Activated naive CD4-positive, alpha-beta T cell treated with anti-CD3 and anti-CD28 coated beads for 36 hours (primary cell): ENCODE measurements at regions of chr15 and their contacts with region 1.

Region 1: DNA sequence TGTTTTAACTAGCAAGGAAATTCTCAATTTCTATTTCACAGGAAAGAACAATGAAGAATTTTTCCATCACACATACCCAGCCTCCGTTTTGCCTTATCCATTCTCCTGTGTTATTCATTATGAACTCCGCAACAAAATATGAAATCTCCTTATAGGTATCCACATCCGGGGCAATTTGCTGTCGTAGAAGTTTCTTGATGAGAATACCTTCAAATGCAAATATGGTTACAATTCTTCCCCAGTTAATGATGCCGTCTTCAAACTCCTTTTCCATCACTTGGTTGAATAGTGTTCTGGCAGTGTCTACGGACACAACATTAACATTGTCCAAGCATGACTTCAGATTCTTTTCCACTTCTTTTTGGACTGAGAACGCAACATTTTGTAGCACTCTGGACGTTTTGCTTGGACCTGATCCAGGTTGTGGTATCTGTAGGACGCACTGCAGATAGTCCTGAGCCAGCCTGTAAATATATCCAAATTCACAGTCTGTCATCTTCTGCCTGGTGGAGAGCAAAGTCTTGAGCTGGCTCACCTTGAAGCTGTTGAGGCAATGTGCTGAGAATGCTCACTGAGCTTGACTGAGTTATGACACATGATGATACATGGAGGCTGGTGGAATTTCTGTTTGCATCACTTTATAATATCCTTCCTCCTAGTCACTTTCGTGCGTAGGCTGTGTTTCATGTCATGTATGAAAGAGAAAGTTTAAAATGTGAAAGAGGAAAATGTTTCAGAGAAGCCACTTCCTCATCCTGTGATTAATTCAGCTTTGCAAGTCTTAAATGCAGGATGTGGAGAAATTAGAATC is at the start of gene BCL2A1:
- DNase-seq: peak; percentile 88
- H3K4me3 Mint-ChIP-seq: peak within 1 kb of the TSS; percentile 81
- H3K27ac Mint-ChIP-seq: peak within 1 kb of the TSS; percentile 95
- H3K4me1 Mint-ChIP-seq: peaks cover 42% of the 10 kb centered on the region
- H3K27me3 Mint-ChIP-seq: no peaks in the 10 kb centered on the region
- total RNA-seq, gene BCL2A1: 79.1 to 88.7 TPM

Region 2: GRCh38 chr15:79896637-79897379 is 74.0 kb before region 1 on chr15 and contains the start of gene MTHFS:
- CTCF ChIA-PET with region 1: interaction called, 3 read pairs
- intact Hi-C with region 1: loop called (anchors 1 kb)
- DNase-seq: peak; percentile 76
- H3K4me3 Mint-ChIP-seq: peak within 1 kb of the TSS; percentile 100
- H3K27ac Mint-ChIP-seq: peak within 1 kb of the TSS; percentile 100
- H3K4me1 Mint-ChIP-seq: peaks cover 42% of the 10 kb centered on the region
- H3K27me3 Mint-ChIP-seq: no peaks in the 10 kb centered on the region
- total RNA-seq, gene MTHFS: 44.8 to 47.0 TPM

Region 3: GRCh38 chr15:79957741-79958140 is 13.1 kb before region 1 on chr15:
- CTCF ChIA-PET with region 1: no interaction called
- intact Hi-C with region 1: loop called (anchors 1 kb)
- DNase-seq: no peak
- H3K4me3 Mint-ChIP-seq: no peak overlapping the region
- H3K27ac Mint-ChIP-seq: no peak overlapping the region
- H3K4me1 Mint-ChIP-seq: peaks cover 47% of the 10 kb centered on the region
- H3K27me3 Mint-ChIP-seq: no peaks in the 10 kb centered on the region

Region 4: DNA sequence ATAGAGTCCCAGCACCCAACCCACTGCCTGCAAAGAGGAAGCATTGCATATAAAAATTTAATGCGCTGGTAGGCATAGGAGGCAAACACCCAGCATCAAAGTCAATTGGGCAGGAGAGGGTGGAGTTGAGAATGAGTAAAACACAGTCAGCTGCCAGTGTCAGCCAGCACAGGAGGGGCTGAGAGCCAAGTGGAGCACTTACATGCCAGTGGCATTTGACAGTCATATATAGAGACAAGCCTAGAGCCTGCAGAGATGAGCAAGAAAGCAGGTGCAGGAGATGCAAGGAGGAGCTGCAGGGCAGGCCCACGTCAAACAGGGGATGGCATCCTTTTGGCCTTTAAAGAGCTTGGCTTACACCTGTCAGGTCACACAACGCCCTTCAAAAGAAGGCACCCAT is 61.0 kb after region 1 on chr15:
- CTCF ChIA-PET with region 1: no interaction called
- intact Hi-C with region 1: loop called (anchors 1 kb)
- DNase-seq: peak; percentile 58
- H3K4me3 Mint-ChIP-seq: no peak overlapping the region
- H3K27ac Mint-ChIP-seq: no peak overlapping the region
- H3K4me1 Mint-ChIP-seq: peaks cover 22% of the 10 kb centered on the region
- H3K27me3 Mint-ChIP-seq: no peaks in the 10 kb centered on the region

Region 5: GRCh38 chr15:80105595-80106450 is 135.0 kb after region 1 on chr15:
- CTCF ChIA-PET with region 1: no interaction called
- intact Hi-C with region 1: loop called (anchors 1 kb)
- DNase-seq: no peak
- H3K4me3 Mint-ChIP-seq: no peak overlapping the region
- H3K27ac Mint-ChIP-seq: no peak overlapping the region
- H3K4me1 Mint-ChIP-seq: peaks cover 45% of the 10 kb centered on the region
- H3K27me3 Mint-ChIP-seq: no peaks in the 10 kb centered on the region

Region 6: GRCh38 chr15:80333261-80333660 is 362.4 kb after region 1 on chr15:
- CTCF ChIA-PET with region 1: no interaction called
- intact Hi-C with region 1: no loop called
- DNase-seq: no peak
- H3K4me3 Mint-ChIP-seq: no peak overlapping the region
- H3K27ac Mint-ChIP-seq: no peak overlapping the region
- H3K4me1 Mint-ChIP-seq: no peaks in the 10 kb centered on the region
- H3K27me3 Mint-ChIP-seq: peaks cover 11% of the 10 kb centered on the region

Region 7: DNA sequence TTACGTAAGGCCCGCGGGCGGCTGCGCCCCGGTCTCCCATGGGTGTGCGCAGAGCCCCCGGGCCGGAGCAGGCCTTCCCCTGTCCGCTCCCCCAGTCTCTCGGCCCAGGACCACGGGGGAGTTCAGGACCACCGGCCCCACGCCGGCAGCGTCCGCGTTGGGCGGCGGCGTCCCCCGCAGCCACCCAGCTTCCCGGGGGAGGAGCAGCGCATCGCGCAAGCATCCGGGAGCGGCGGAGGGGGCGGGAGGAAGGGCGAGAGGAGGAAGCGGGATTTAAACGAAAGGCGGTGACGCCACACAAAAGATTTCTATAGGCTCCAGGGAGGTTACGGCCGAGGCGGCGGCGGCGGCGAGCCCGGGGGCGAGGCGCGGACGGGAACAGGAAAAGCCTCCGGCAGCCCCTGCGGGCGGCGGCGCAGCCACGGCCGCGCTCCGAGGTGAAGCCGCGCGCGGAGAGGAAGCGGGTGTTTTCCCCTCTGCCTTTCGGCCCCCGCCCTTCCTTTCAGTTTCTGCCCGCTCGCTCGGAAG is 1029.9 kb after region 1 on chr15 and contains the start of gene TLNRD1:
- CTCF ChIA-PET with region 1: no interaction called
- intact Hi-C with region 1: loop called (anchors 5 kb)
- DNase-seq: peak; percentile 92
- H3K4me3 Mint-ChIP-seq: peak within 1 kb of the TSS; percentile 86
- H3K27ac Mint-ChIP-seq: peak within 1 kb of the TSS; percentile 94
- H3K4me1 Mint-ChIP-seq: peaks cover 40% of the 10 kb centered on the region
- H3K27me3 Mint-ChIP-seq: no peaks in the 10 kb centered on the region
- total RNA-seq, gene TLNRD1: 15.9 to 16.6 TPM